ENCODE measurements at regions of chr12 and their contacts with region 1.

Region 1: GRCh38 chr12:12456637-12457036 is 99.8 kb downstream of the BORCS5 start:
- DNase-seq: peak; percentile 36
- ATAC-seq: peak; percentile 61
- H3K4me3 Mint-ChIP-seq: peak overlapping the region; percentile 56
- H3K27ac Mint-ChIP-seq: peak overlapping the region; percentile 91
- H3K4me1 Mint-ChIP-seq: peaks cover 43% of the 10 kb centered on the region
- H3K27me3 Mint-ChIP-seq: no peaks in the 10 kb centered on the region

Region 2: GRCh38 chr12:12442548-12443071 is 14.0 kb before region 1 on chr12:
- CTCF ChIA-PET with region 1: interaction called, 21 read pairs
- DNase-seq: no peak
- ATAC-seq: no peak
- H3K4me3 Mint-ChIP-seq: peak overlapping the region; percentile 54
- H3K27ac Mint-ChIP-seq: peak overlapping the region; percentile 100
- H3K4me1 Mint-ChIP-seq: peaks cover 86% of the 10 kb centered on the region
- H3K27me3 Mint-ChIP-seq: no peaks in the 10 kb centered on the region

Region 3: GRCh38 chr12:12467688-12468261 is 11.1 kb after region 1 on chr12:
- CTCF ChIA-PET with region 1: interaction called, 12 read pairs
- DNase-seq: peak; percentile 58
- ATAC-seq: peak; percentile 40
- H3K4me3 Mint-ChIP-seq: no peak overlapping the region
- H3K27ac Mint-ChIP-seq: peak overlapping the region; percentile 81
- H3K4me1 Mint-ChIP-seq: peaks cover 79% of the 10 kb centered on the region
- H3K27me3 Mint-ChIP-seq: no peaks in the 10 kb centered on the region

Region 4: GRCh38 chr12:12486661-12487240 is 30.1 kb after region 1 on chr12:
- CTCF ChIA-PET with region 1: no interaction called
- DNase-seq: peak; percentile 52
- ATAC-seq: peak; percentile 40
- H3K4me3 Mint-ChIP-seq: no peak overlapping the region
- H3K27ac Mint-ChIP-seq: peak overlapping the region; percentile 69
- H3K4me1 Mint-ChIP-seq: peaks cover 50% of the 10 kb centered on the region
- H3K27me3 Mint-ChIP-seq: no peaks in the 10 kb centered on the region

Measured in activated CD8-positive, alpha-beta memory T cell treated with anti-CD3 and anti-CD28 coated beads, Interleukin-2, amount 10 ng/mL, durations not matched to agents 7 days and 5 days (primary cell).